Heart left ventricle (tissue), 16 donors: ENCODE measurements at regions of chr7 and their contacts with region 1.

Region 1: GRCh38 chr7:37833107-37833817 is 15.1 kb upstream of the NME8 start:
- DNase-seq: peak; percentile 20 to 60 (median 26)
- ATAC-seq: peak in 2 of 4 donors; percentile 41 to 42
- H3K4me3 ChIP-seq: peak overlapping the region in 9 of 12 donors; percentile 24 to 50 (median 39)
- H3K27ac ChIP-seq: no peak overlapping the region
- H3K4me1 ChIP-seq: peaks cover 0 to 12% (median 3%) of the 10 kb centered on the region in 12 donors
- H3K27me3 ChIP-seq: peaks cover 0 to 4% (median 0%) of the 10 kb centered on the region in 9 donors
- CTCF ChIP-seq: peak; percentile 59 to 85 (median 74)
- POLR2A ChIP-seq: no peak

Region 2: DNA sequence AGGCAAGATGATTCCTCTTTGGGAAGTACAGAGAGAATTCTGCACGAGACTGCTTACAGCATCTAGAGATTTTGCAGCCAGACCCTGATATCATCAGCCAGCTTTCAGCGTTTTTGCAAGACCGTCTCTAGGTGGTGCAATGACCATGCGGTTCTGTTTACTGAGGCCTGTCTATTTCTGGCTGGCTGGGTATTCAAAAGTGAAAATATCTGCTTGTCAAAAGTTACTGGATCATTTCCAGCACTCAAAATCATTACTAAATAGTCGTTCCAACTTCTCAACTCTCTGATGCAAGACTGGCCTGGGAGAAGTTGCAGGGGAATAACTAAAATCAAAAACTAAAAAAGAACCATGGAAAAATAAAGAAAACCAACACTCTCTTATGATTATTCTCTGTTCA is 624.7 kb before region 1 on chr7:
- intact Hi-C with region 1: loop called in 9 of 10 experiments (anchors 2 to 5 kb)
- DNase-seq: peak in 4 of 5 donors; percentile 73 to 76 (median 74)
- ATAC-seq: peak; percentile 85 to 93 (median 90)
- H3K4me3 ChIP-seq: no peak overlapping the region
- H3K27ac ChIP-seq: peak overlapping the region; percentile 6 to 75 (median 56)
- H3K4me1 ChIP-seq: peaks cover 0 to 33% (median 22%) of the 10 kb centered on the region in 12 donors
- H3K27me3 ChIP-seq: no peaks in the 10 kb centered on the region
- CTCF ChIP-seq: peak; percentile 51 to 82 (median 59)
- POLR2A ChIP-seq: no peak

Region 3: DNA sequence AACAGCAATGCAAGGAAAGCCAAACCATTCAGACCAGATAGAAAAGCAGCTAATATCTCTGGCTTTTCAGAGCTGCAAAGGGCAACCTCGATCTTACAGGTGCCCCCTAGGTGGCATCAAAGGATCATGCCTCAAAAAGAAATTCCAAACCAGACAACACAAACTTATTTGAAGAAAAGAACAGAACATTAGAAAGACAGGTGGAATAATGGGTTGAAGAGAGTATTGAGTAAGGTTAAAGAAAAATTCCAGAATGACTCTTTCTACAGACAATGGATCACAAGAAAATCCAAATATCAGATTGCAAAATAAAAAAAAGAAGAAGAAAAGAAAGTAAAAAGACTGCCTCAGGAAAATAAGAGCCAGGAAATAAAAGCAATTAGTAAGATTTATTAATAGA is 598.3 kb before region 1 on chr7:
- intact Hi-C with region 1: loop called in 8 of 10 experiments (anchors 2 to 10 kb)
- DNase-seq: no peak
- ATAC-seq: no peak
- H3K4me3 ChIP-seq: no peak overlapping the region
- H3K27ac ChIP-seq: no peak overlapping the region
- H3K4me1 ChIP-seq: peaks cover 0 to 10% (median 1%) of the 10 kb centered on the region in 12 donors
- H3K27me3 ChIP-seq: no peaks in the 10 kb centered on the region
- CTCF ChIP-seq: peak; percentile 27 to 65 (median 52)
- POLR2A ChIP-seq: no peak

Region 4: GRCh38 chr7:37504801-37505200 is 328.5 kb before region 1 on chr7:
- intact Hi-C with region 1: loop called in 1 of 10 experiments (anchors 10 kb)
- DNase-seq: no peak
- ATAC-seq: peak in 1 of 4 donors; percentile 48
- H3K4me3 ChIP-seq: no peak overlapping the region
- H3K27ac ChIP-seq: peak overlapping the region in 4 of 12 donors; percentile 11 to 51 (median 31)
- H3K4me1 ChIP-seq: peaks cover 0 to 13% (median 0%) of the 10 kb centered on the region in 12 donors
- H3K27me3 ChIP-seq: peaks cover 0 to 4% (median 0%) of the 10 kb centered on the region in 9 donors
- CTCF ChIP-seq: no peak
- POLR2A ChIP-seq: no peak

Region 5: GRCh38 chr7:37510043-37510634 is 323.1 kb before region 1 on chr7:
- intact Hi-C with region 1: loop called in 3 of 10 experiments (anchors 10 kb)
- DNase-seq: no peak
- ATAC-seq: no peak
- H3K4me3 ChIP-seq: no peak overlapping the region
- H3K27ac ChIP-seq: no peak overlapping the region
- H3K4me1 ChIP-seq: peaks cover 0 to 10% (median 0%) of the 10 kb centered on the region in 12 donors
- H3K27me3 ChIP-seq: peaks cover 0 to 4% (median 0%) of the 10 kb centered on the region in 9 donors
- CTCF ChIP-seq: peak; percentile 48 to 70 (median 64)
- POLR2A ChIP-seq: no peak

Region 6: DNA sequence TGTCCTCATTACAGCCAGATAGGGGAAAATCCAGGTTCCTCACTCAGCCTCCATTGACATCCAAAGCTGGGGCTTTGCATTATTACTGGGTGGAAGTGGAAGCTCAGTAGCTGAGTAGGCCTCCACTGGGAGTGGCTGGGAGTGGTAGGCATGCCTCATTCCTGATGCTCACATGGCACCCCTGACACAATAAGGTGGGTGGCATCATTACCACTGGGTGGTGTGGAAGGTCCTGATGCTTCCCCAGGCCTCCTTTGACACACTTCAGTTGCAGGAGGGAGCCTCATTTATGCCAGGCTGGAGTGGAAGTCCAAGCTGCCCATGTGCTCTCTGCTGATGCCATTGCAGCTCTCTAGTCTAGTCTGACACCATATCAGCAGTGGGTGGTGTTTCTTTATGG is 197.9 kb before region 1 on chr7:
- intact Hi-C with region 1: loop called in 2 of 10 experiments (anchors 5 to 10 kb)
- DNase-seq: no peak
- ATAC-seq: no peak
- H3K4me3 ChIP-seq: no peak overlapping the region
- H3K27ac ChIP-seq: no peak overlapping the region
- H3K4me1 ChIP-seq: no peaks in the 10 kb centered on the region
- H3K27me3 ChIP-seq: no peaks in the 10 kb centered on the region
- CTCF ChIP-seq: no peak
- POLR2A ChIP-seq: no peak

Region 7: DNA sequence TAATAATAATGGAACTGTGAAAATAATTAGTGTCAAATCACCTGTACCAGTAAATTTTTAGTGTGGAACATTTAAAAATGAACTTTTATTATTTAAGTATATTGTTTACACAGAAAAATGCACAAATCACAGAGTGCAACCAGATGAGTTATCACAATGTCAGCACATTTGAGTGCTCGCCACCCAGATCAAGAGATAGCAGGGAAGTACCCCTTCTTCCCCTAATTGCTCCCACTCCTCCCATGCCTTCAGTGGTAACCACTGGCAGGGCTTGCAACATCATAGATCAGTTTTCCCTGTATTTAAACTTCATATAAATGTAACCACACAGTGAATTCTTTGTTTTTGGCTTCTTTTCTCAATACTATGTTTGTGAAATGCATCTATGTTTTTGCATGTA is 157.5 kb before region 1 on chr7:
- intact Hi-C with region 1: loop called in 1 of 10 experiments (anchors 5 kb)
- DNase-seq: no peak
- ATAC-seq: no peak
- H3K4me3 ChIP-seq: no peak overlapping the region
- H3K27ac ChIP-seq: peak overlapping the region in 1 of 12 donors; percentile 76
- H3K4me1 ChIP-seq: peaks cover 0 to 11% (median 0%) of the 10 kb centered on the region in 12 donors
- H3K27me3 ChIP-seq: no peaks in the 10 kb centered on the region
- CTCF ChIP-seq: no peak
- POLR2A ChIP-seq: no peak

Region 8: DNA sequence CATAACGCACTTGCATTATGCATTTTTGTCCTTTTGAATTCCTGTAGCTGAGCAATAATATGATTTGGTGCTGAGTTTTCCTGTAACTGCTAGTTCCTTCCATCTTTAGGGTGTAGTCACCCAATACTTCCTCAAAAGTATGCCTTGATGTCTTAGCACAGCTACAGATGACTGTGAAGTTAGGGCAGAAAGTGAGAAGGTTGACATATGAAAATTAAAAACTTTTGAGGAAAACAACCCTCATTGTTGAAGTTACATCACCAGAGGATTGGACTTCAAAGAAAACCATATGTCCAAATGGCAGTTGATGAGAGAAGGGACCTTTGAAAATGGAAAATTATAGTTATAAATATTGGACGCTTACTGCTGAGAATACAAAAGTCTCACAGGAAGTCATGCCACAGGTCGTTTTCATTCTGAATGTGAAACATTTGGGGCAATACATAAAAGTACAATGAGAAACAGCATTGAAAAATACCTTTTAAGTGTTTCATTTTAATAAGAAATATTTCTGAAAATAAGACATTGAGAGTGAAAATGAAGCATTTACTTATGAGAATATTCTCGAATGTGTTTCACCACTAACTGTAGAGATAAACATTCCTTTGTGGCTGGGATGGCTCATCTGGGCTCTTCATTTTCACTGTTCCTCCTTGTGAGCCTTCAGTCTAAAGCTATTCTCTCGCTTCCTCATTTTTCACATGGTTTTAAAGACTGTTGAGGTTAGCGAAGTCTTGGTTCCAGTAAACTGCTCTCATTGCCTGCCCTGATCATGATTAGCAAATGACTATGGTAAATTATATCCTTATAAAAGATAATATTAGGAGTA is 46.3 kb before region 1 on chr7:
- intact Hi-C with region 1: no loop called
- DNase-seq: no peak
- ATAC-seq: peak in 3 of 4 donors; percentile 41 to 55 (median 44)
- H3K4me3 ChIP-seq: no peak overlapping the region
- H3K27ac ChIP-seq: peak overlapping the region in 2 of 12 donors; percentile 2 to 62
- H3K4me1 ChIP-seq: peaks cover 0 to 6% (median 0%) of the 10 kb centered on the region in 12 donors
- H3K27me3 ChIP-seq: no peaks in the 10 kb centered on the region
- CTCF ChIP-seq: no peak
- POLR2A ChIP-seq: no peak

Region 9: DNA sequence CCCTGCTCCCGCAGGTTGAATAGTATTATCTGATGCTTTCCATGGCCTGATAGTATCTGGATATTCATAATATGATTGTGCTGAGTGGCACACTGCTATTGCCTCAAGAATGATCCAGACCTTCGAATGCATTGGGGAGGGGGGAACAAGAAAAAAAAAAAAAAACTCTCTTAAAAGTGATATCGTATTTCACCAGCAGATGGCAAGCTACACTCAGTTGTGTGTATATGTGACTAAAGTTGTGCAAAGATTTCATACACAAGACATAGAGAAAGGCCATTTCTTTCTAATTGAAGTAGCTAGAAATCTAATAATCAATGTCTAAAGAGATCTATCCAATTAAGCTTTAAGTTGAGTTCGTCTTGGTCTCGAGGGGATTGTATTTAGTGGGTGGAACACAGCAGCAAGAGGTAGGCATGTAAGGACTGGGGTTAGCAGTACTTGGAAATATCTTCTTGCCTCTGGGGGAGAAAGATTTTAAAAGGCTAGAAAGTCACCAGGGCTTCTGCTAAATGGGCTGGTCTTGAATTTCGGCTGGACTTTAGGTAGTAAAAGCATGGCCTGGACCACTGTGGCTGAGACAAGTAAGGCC is 68.1 kb after region 1 on chr7:
- intact Hi-C with region 1: no loop called
- DNase-seq: no peak
- ATAC-seq: peak in 3 of 4 donors; percentile 42 to 69 (median 52)
- H3K4me3 ChIP-seq: no peak overlapping the region
- H3K27ac ChIP-seq: no peak overlapping the region
- H3K4me1 ChIP-seq: peaks cover 0 to 17% (median 3%) of the 10 kb centered on the region in 12 donors
- H3K27me3 ChIP-seq: no peaks in the 10 kb centered on the region
- CTCF ChIP-seq: peak; percentile 32 to 69 (median 50)
- POLR2A ChIP-seq: no peak